HepG2 (cell line): ENCODE measurements at regions of chr7 and their contacts with region 1.

Region 1: GRCh38 chr7:17234398-17235031 is 63.9 kb upstream of the AHR start:
- DNase-seq: peak; percentile 32
- ATAC-seq: no peak
- H3K4me3 ChIP-seq: no peak overlapping the region
- H3K27ac ChIP-seq: no peak overlapping the region
- H3K4me1 ChIP-seq: peaks cover 14% of the 10 kb centered on the region
- H3K27me3 ChIP-seq: peaks cover 0 to 11% of the 10 kb centered on the region in 2 experiments; a peak in 3 of 5 replicates
- CTCF ChIP-seq: no peak
- EP300 ChIP-seq: no peak
- POLR2A ChIP-seq: no peak
- RAD21 ChIP-seq: no peak

Region 2: DNA sequence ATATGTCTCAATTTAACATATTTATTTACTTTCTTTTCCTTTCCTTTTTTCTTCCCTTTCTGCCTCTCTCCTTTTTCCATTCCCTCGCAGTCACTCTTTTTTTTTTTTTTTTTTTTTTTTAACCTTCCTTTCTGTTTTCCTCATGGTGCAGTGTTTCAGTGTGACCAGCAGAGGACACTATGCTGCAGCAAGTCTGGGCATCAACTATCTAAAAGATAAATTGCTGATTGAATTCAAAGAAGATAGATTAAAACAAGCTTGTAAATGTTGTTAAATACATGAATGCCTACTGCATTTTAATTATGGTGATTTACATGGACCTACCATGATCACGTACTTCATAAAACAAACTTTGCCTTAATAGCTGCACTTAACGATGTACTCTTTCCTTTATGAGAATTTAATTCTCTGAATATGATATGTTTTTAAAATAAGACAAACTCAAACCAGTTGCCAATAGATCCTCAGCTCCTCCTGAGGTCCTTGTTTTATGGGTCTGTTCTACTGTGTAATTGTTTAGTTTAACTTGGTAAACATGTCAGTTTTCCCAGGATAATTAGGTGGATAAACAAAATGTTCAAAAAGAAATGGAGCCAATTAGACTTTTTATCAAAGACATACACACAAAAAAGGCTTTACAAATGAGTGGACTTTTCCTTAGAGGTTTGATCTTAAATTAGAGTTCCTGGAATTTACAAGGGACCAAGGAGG is 251.7 kb before region 1 on chr7:
- CTCF ChIA-PET with region 1: no interaction called
- POLR2A ChIA-PET with region 1: no interaction called
- in situ Hi-C with region 1: no loop called
- intact Hi-C with region 1: loop called (anchors 10 kb)
- DNase-seq: peak; percentile 58
- ATAC-seq: no peak
- H3K4me3 ChIP-seq: no peak overlapping the region
- H3K27ac ChIP-seq: no peak overlapping the region
- H3K4me1 ChIP-seq: peaks cover 54% of the 10 kb centered on the region
- H3K27me3 ChIP-seq: no peaks in the 10 kb centered on the region
- CTCF ChIP-seq: peak; percentile 78
- EP300 ChIP-seq: no peak
- POLR2A ChIP-seq: no peak
- RAD21 ChIP-seq: peak; percentile 75